ENCODE measurements at regions of chr7 and their contacts with region 1.

Region 1: DNA sequence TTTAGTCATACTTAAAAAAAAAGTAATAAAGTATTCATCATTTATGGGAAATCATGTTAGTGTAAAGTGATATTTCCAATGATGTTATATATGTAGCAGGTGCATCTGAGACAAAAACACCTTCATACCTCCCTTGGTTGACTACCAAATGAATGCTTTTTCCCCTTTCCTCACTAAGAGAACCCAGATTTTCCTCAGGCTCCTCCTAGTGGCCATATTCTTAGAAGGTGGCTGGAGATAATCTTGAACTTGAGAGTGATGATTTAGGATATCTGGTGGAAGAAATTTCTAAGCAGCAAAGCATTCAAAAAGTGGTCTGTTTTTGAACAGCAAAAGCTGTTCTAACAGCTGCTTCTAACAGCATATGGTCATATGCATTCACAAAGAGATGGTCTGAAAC is 16.8 kb upstream of the DNAH11 start:
- DNase-seq: peak; percentile 21
- H3K4me3 Mint-ChIP-seq: no peak overlapping the region
- H3K27ac Mint-ChIP-seq: no peak overlapping the region
- H3K4me1 Mint-ChIP-seq: peaks cover 4% of the 10 kb centered on the region
- H3K27me3 Mint-ChIP-seq: no peaks in the 10 kb centered on the region
- CTCF ChIP-seq: peak; percentile 21

Region 2: DNA sequence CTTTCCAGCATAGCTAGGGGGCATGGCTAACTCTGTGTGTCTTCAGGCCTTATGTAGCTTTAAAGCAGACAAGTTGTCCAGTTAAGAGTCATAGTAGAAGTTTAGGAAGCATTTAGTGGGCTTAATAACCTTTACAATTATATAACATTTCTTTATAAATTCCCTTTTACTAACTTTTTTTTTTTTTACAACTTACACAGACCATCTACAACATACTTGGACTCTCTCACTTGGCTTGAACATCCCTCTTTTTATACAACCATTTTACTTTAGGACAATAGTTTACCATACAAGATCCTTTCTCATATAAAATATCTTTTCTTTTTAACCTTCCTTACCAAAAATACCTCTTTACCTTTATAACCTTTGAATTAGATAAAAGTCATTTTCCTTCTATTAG is 71.8 kb before region 1 on chr7:
- CTCF ChIA-PET with region 1: interaction called, 10 read pairs
- POLR2A ChIA-PET with region 1: no interaction called
- intact Hi-C with region 1: no loop called
- DNase-seq: no peak
- H3K4me3 Mint-ChIP-seq: no peak overlapping the region
- H3K27ac Mint-ChIP-seq: no peak overlapping the region
- H3K4me1 Mint-ChIP-seq: no peaks in the 10 kb centered on the region
- H3K27me3 Mint-ChIP-seq: no peaks in the 10 kb centered on the region
- CTCF ChIP-seq: no peak

Measured in MCF 10A (cell line).